Psoas muscle (tissue), 8 donors: ENCODE measurements at regions of chr15 and their contacts with region 1.

Region 1: GRCh38 chr15:65916664-65917406 is 47.5 kb downstream of the RAB11A start:
- DNase-seq: peak; percentile 49 to 64
- ATAC-seq: peak; percentile 76 to 90 (median 84)
- H3K4me3 ChIP-seq: no peak overlapping the region
- H3K27ac ChIP-seq: no peak overlapping the region
- H3K4me1 ChIP-seq: no peaks in the 10 kb centered on the region
- H3K27me3 ChIP-seq: no peaks in the 10 kb centered on the region
- CTCF ChIP-seq: peak; percentile 54

Region 2: DNA sequence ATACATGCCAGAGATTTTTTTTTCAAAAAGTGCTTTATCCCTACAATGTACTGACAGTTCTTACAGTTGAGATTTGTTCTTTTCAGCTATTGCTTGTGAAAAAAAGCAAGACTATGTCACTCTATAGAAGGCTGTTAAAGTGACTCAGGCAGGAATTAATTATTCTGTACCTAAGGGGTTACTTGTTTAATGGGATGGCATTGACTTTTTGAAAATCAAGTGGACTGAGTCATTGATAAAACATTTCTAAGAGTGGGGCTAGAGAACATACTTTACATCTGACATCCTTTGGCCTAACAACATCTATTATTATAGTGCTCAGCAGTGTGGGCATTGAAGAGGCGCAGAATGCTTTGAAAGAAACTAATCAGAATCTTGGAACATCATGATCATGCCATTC is 340.2 kb before region 1 on chr15:
- intact Hi-C with region 1: no loop called
- DNase-seq: no peak
- ATAC-seq: no peak
- H3K4me3 ChIP-seq: no peak overlapping the region
- H3K27ac ChIP-seq: no peak overlapping the region
- H3K4me1 ChIP-seq: no peaks in the 10 kb centered on the region
- H3K27me3 ChIP-seq: no peaks in the 10 kb centered on the region
- CTCF ChIP-seq: no peak

Region 3: DNA sequence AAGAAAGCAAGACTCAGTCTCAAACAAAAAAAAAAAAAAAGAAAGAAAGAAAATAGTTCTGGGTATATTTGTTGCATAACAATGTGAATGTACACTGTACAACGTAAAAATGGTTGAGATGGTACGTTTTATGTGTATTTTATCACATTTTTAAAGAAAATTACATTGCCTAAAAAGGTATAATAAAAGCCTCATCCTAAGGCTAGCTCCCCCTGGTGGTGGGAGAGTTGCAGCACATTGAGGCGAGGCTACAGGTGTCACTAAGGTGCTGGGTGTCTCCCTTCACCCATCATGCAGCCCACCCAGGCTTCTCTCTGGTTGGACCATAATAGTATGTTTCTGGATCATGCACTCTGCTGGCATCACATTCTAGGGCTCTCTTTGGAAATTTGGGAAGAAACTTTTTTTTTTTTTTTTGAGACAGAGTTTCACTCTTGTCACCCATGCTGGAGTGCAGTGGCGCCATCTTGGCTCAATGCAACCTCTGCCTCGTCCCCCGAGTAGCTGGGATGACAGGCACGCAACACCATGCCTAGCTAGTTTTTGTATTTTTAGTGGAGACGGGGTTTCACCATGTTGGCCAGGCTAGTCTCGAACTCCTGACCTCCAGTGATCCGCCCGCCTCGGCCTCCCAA is 59.9 kb before region 1 on chr15:
- intact Hi-C with region 1: no loop called
- DNase-seq: peak; percentile 56 to 68
- ATAC-seq: peak in 3 of 4 donors; percentile 54 to 69 (median 64)
- H3K4me3 ChIP-seq: no peak overlapping the region
- H3K27ac ChIP-seq: peak overlapping the region; percentile 89
- H3K4me1 ChIP-seq: peaks cover 16% of the 10 kb centered on the region
- H3K27me3 ChIP-seq: no peaks in the 10 kb centered on the region
- CTCF ChIP-seq: peak; percentile 64

Region 4: DNA sequence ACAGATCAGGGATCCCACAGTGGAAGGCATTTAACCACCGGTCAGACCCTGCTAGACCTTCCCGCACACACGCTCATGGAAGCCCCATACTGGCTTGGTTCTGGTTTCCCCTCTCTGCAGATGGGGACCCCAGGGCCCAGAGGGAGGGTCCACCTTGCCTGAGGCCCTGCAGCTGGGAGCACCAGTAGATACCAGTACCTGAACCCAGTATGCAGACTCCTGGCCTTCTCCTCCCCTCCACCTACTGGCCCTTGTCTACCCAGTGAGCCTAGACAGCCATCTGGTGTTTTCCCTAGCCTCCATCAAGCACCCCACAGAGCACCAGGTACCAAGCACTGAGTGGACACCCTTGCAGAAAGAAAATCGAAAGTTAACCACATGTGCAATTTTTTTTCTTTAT is 271.6 kb after region 1 on chr15:
- intact Hi-C with region 1: loop called (anchors 5 kb)
- DNase-seq: no peak
- ATAC-seq: no peak
- H3K4me3 ChIP-seq: no peak overlapping the region
- H3K27ac ChIP-seq: no peak overlapping the region
- H3K4me1 ChIP-seq: no peaks in the 10 kb centered on the region
- H3K27me3 ChIP-seq: peaks cover 0 to 34% (median 9%) of the 10 kb centered on the region in 3 donors
- CTCF ChIP-seq: no peak

Region 5: DNA sequence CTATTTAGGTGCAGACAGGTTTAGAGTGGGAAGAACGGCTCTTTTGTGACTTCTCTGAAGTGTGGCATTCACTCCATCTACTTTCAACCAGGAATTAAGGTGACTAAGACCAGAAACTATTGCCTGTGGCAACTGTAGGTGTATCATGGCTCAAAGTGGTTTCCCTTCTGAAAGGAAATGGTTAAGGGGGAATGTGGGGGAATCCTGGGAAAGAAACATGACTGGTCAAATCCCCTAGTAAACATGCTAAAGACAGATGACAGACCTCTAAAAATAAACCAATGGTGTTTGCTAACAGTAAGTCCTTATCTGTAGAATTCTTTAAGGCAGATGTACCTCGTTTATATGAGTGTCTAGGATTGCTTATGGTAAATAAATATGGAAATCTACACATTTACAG is 279.8 kb after region 1 on chr15:
- intact Hi-C with region 1: loop called in 1 of 2 experiments (anchors 5 kb)
- DNase-seq: no peak
- ATAC-seq: no peak
- H3K4me3 ChIP-seq: no peak overlapping the region
- H3K27ac ChIP-seq: no peak overlapping the region
- H3K4me1 ChIP-seq: no peaks in the 10 kb centered on the region
- H3K27me3 ChIP-seq: no peaks in the 10 kb centered on the region
- CTCF ChIP-seq: no peak

Region 6: GRCh38 chr15:66269326-66270038 is 352.6 kb after region 1 on chr15:
- intact Hi-C with region 1: loop called in 1 of 2 experiments (anchors 10 kb)
- DNase-seq: no peak
- ATAC-seq: no peak
- H3K4me3 ChIP-seq: no peak overlapping the region
- H3K27ac ChIP-seq: no peak overlapping the region
- H3K4me1 ChIP-seq: no peaks in the 10 kb centered on the region
- H3K27me3 ChIP-seq: peaks cover 0 to 12% (median 2%) of the 10 kb centered on the region in 3 donors
- CTCF ChIP-seq: no peak

Region 7: DNA sequence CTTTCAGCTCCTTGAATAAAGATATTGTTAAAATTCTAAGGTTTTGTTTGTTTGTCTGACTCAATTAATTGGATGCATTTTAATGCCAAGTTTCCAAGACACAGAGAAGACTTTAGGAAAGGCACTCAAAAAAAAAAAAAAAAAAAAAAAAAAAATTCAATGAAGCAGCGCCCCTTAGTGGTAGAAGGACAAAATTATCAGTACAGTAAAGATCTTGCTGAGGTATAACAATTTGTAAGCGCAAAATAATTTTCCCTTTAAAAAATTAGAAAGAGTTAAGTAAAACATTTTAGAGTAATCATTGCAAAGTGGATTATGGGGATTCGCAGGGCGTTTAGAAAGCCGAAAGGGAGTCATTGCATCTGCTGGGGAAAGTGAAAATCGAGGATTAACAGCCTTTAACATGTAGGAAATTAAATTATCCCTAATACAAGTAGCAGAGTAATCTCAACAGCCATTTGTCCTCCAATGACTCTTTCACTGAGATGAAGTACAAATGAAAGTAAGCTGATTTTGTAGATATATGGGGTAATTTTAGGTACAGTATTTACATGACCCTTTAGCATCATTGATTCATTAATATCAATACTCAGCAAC is 370.7 kb after region 1 on chr15:
- intact Hi-C with region 1: loop called in 1 of 2 experiments (anchors 10 kb)
- DNase-seq: no peak
- ATAC-seq: peak in 1 of 4 donors; percentile 52
- H3K4me3 ChIP-seq: no peak overlapping the region
- H3K27ac ChIP-seq: no peak overlapping the region
- H3K4me1 ChIP-seq: peaks cover 9% of the 10 kb centered on the region
- H3K27me3 ChIP-seq: no peaks in the 10 kb centered on the region
- CTCF ChIP-seq: peak; percentile 61

Region 8: GRCh38 chr15:66685638-66686150 is 768.9 kb after region 1 on chr15:
- intact Hi-C with region 1: loop called in 1 of 2 experiments (anchors 5 kb)
- DNase-seq: no peak
- ATAC-seq: no peak
- H3K4me3 ChIP-seq: no peak overlapping the region
- H3K27ac ChIP-seq: no peak overlapping the region
- H3K4me1 ChIP-seq: no peaks in the 10 kb centered on the region
- H3K27me3 ChIP-seq: no peaks in the 10 kb centered on the region
- CTCF ChIP-seq: no peak